Activated B cell treated with CpG ODN at 0.5 μM for 24 hours (primary cell): ENCODE measurements at regions of chr1 and their contacts with region 1.

Region 1: GRCh38 chr1:70354332-70355110 is at the start of gene ANKRD13C:
- DNase-seq: peak; percentile 74
- ATAC-seq: peak; percentile 93
- H3K4me3 Mint-ChIP-seq: peak within 1 kb of the TSS; percentile 99
- H3K27ac Mint-ChIP-seq: peak within 1 kb of the TSS; percentile 98
- H3K4me1 Mint-ChIP-seq: peaks cover 44% of the 10 kb centered on the region
- H3K27me3 Mint-ChIP-seq: no peaks in the 10 kb centered on the region
- CTCF ChIP-seq: no peak
- total RNA-seq, gene ANKRD13C: 20.9 and 21.2 TPM in 2 replicates

Region 2: GRCh38 chr1:70205434-70206118 is 148.9 kb before region 1 on chr1 and contains the start of gene LRRC40:
- CTCF ChIA-PET with region 1: no interaction called
- POLR2A ChIA-PET with region 1: interaction called, 6 read pairs
- intact Hi-C with region 1: loop called (anchors 1 kb)
- DNase-seq: peak; percentile 98
- ATAC-seq: peak; percentile 96
- H3K4me3 Mint-ChIP-seq: peak within 1 kb of the TSS; percentile 99
- H3K27ac Mint-ChIP-seq: peak within 1 kb of the TSS; percentile 97
- H3K4me1 Mint-ChIP-seq: peaks cover 73% of the 10 kb centered on the region
- H3K27me3 Mint-ChIP-seq: no peaks in the 10 kb centered on the region
- CTCF ChIP-seq: no peak
- total RNA-seq, gene LRRC40: 15.8 and 16.7 TPM in 2 replicates

Region 3: DNA sequence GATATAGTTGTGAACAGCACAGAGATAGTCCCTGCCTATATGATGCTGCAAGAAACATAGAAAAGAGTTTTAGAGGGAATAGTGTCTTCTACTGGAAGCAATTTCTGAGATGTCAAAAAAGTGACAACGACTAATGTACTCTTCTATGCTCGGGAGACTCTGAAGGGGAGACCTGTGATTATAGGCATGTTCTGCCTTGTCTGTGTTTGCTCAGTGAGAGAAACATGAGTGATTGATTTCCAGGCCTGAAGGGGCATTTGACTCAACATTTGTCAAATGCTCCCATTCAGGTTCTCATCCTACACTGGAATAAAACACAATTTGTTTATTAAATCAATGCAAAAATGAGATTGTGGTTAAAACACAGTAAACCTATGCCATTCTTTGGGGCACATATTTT is 188.3 kb after region 1 on chr1:
- CTCF ChIA-PET with region 1: no interaction called
- POLR2A ChIA-PET with region 1: no interaction called
- intact Hi-C with region 1: no loop called
- DNase-seq: no peak
- ATAC-seq: no peak
- H3K4me3 Mint-ChIP-seq: no peak overlapping the region
- H3K27ac Mint-ChIP-seq: no peak overlapping the region
- H3K4me1 Mint-ChIP-seq: no peaks in the 10 kb centered on the region
- H3K27me3 Mint-ChIP-seq: peaks cover 4% of the 10 kb centered on the region
- CTCF ChIP-seq: no peak

Region 4: DNA sequence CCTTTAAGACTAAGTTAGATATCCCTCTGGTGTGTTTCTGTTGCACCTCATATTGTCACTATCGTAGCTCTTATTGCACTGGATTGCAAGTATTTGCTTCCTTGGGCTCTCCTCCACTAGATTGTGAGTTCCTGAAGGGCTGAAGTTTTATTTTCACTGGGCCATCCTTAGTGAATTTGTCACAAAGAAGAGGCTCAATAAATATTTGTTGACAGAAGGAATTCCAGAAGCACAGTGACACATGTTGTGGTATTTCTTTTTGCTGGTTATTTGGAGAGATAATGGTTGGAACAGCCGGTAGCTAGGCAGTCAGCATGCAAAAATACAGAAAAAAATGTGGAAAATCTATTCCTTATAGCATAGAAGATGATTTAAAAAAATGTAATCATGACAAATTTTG is 856.2 kb after region 1 on chr1:
- CTCF ChIA-PET with region 1: no interaction called
- POLR2A ChIA-PET with region 1: no interaction called
- intact Hi-C with region 1: no loop called
- DNase-seq: no peak
- ATAC-seq: no peak
- H3K4me3 Mint-ChIP-seq: no peak overlapping the region
- H3K27ac Mint-ChIP-seq: no peak overlapping the region
- H3K4me1 Mint-ChIP-seq: no peaks in the 10 kb centered on the region
- H3K27me3 Mint-ChIP-seq: no peaks in the 10 kb centered on the region
- CTCF ChIP-seq: no peak